ENCODE measurements at regions of chr19 and their contacts with region 1.

Region 1: DNA sequence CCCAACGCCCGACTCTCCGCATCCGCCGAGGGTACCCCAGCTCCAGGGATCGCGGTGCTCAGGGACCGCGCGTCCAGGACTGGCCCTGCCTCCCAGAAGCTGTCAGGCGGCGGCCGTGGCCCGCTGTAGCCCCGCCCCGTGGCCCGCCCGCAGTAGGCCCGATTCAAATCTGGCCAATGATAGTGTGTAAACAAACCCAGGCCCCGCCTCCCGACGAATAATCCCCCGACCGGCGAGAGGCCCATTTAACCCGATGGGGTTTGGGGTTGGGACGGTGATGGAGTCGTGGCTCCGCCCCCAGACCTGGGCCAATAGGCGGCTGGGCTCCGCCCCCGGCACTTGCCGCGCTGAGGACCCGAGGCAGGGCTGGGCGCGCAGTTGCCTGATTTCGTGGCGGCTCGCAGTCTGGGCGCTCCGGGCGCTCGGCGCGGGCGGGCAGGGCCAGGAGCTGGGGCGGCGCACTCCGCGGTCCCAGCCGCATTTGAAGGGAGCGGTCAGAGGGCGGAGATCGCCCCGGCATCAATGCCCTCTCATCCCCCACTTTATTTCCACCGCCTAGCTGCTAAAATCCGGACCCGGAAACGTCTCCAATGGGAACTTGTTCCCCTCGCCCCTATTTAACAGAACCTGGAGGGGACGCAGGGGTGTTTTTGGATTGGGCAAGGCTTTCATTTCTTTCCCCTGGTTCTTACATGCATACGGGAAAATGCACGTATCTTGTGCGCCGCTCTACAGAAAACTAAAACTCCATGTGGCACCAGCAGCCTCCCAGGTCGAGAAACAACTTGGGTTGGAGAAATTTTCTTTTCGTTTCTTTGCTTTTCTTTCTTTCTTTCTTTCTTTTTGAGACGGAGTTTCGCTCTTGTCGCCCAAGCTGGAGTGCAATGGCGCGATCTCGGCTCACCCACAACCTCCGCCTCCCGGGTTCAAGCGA is 8.4 kb upstream of the BICRA start:
- DNase-seq: peak; percentile 99 to 100 (median 100)
- ATAC-seq: peak; percentile 97
- H3K4me3 ChIP-seq: peak overlapping the region; percentile 77 to 93
- H3K4me3 Mint-ChIP-seq: peak overlapping the region; percentile 82
- H3K27ac ChIP-seq: peak overlapping the region; percentile 80 to 83
- H3K27ac Mint-ChIP-seq: peak overlapping the region; percentile 81
- H3K4me1 ChIP-seq: peaks cover 10% of the 10 kb centered on the region
- H3K4me1 Mint-ChIP-seq: peaks cover 26% of the 10 kb centered on the region
- H3K27me3 ChIP-seq: no peaks in the 10 kb centered on the region
- H3K27me3 Mint-ChIP-seq: no peaks in the 10 kb centered on the region
- CTCF ChIP-seq: no peak

Region 2: DNA sequence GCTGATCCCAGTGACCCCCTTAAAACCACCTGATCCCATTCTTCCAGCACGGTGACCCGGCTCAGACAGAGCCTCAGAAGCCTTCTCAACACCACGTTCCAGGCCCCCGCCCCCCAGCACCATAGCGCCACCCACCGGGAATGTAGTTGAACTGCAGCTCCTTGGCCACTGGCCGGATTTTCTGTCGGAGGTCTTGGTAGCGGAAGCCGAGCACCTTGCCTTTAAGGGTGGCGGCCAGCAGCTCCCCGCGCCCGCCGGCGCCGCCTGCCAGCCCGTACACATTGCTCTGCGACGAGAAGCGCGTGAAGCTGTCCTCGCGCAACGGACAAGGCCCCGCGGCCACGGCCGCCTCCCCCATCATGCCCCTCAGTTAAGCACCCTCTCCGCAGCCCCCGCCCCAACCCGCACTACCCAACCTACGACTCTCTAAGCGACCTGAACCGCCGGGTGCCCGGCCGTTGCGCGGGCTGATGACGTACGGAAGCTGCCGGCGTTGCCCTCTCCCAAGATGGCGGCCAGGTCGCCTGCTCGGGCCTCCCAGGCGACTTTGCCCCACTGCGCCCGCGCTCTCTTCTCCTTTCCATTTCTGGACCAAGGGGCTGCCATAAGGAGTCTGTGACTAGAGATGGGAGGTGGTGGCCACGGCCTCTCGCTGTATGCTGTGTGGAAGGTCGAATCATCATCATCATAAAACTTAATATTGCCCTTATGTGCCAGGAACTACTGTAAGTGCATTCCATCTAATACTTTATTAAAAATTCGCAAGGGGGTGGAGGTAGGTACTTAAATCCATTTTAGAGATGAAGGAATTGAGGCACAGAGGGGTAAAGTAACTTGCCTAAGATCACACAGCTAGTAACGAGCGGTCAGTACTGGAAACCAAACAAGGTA is 116.5 kb before region 1 on chr19 and contains the start of gene KPTN:
- CTCF ChIA-PET with region 1: no interaction called
- POLR2A ChIA-PET with region 1: interaction called, 3 read pairs
- intact Hi-C with region 1: loop called in 1 of 2 experiments (anchors 1 kb)
- DNase-seq: peak; percentile 76 to 94 (median 87)
- ATAC-seq: peak; percentile 81
- H3K4me3 ChIP-seq: peak within 1 kb of the TSS; percentile 72 to 74
- H3K4me3 Mint-ChIP-seq: peak within 1 kb of the TSS; percentile 98
- H3K27ac ChIP-seq: peak within 1 kb of the TSS; percentile 75 to 94
- H3K27ac Mint-ChIP-seq: peak within 1 kb of the TSS; percentile 98
- H3K4me1 ChIP-seq: peaks cover 38% of the 10 kb centered on the region
- H3K4me1 Mint-ChIP-seq: peaks cover 45% of the 10 kb centered on the region
- H3K27me3 ChIP-seq: no peaks in the 10 kb centered on the region
- H3K27me3 Mint-ChIP-seq: no peaks in the 10 kb centered on the region
- CTCF ChIP-seq: peak; percentile 69
- total RNA-seq, gene KPTN: 5.4 to 5.9 TPM

Region 3: DNA sequence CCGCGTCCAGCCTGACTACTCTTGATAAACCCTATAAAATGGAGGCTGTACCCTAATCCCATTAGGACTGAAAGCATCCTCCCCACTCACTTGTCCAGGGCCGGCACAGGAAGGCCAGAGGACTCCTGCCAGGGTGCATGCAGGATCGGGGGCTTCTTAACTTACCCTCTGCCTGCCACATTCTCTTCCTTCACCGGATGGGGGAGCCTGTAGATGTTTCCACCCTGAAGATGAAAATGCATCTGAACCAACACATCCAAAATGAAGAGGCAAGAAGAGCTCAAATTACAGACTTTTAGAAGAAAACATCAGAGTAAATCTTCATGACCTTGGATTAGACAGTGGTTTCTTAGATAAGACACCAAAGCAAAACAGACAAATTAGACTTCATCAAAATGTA is 59.8 kb before region 1 on chr19:
- CTCF ChIA-PET with region 1: interaction called, 4 read pairs
- POLR2A ChIA-PET with region 1: no interaction called
- intact Hi-C with region 1: loop called (anchors 1 to 2 kb)
- DNase-seq: peak in 2 of 9 experiments; percentile 42 to 63
- ATAC-seq: no peak
- H3K4me3 ChIP-seq: no peak overlapping the region
- H3K4me3 Mint-ChIP-seq: no peak overlapping the region
- H3K27ac ChIP-seq: peak overlapping the region in 1 of 2 experiments; percentile 65
- H3K27ac Mint-ChIP-seq: peak overlapping the region; percentile 90
- H3K4me1 ChIP-seq: peaks cover 25% of the 10 kb centered on the region
- H3K4me1 Mint-ChIP-seq: peaks cover 21% of the 10 kb centered on the region
- H3K27me3 ChIP-seq: peaks cover 0 to 11% of the 10 kb centered on the region in 2 experiments
- H3K27me3 Mint-ChIP-seq: peaks cover 6% of the 10 kb centered on the region
- CTCF ChIP-seq: no peak

Region 4: DNA sequence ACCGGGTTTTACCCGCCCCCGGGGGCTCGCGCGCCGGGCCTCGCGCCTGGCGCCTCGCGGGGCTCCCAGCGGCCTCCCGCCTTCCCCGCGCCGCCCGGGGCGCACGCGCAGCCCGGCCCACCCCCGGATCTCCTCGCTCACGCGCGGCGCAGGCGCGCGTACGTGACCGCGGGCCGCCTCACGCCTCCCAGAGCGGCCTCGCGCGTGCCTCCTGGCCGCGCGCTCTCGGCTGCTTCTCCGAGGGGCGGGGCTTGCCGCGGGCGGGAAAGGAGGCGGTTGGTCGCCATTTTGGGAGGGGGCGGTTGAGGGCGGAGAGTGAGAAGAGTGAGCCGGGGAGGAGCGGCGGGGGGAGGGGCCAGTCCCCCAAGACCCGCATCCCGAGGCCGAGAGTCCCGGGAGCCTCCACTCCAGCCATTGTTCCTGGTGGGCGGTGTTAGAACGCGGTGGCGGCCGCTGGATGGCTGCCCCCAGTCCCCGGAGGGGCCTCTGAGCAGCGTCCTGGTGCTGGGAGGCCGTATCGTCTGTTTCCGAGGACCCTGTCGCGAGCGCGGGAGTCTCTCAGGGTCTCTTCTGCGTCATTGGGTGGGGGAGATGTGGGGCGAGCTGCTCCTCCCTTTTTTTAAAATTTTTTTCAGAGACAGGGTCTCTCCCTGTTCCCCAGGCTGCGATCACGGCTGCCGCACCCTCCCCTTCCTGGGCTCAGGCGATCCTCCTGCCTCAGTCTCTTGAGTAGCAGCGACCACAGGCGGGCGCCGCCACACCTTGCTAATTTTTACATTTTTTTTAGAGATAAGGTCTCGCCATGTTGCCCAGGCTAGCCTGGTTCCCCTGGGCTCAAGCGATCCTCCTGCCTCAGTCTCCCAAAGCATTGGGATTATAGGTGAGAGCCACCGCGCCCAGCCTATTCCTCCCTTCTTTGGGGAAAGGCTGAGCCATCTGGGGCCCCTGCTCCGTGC is 27.2 kb before region 1 on chr19 and contains the start of gene ZNF541:
- CTCF ChIA-PET with region 1: interaction called, 5 read pairs
- POLR2A ChIA-PET with region 1: interaction called, 5 read pairs
- intact Hi-C with region 1: loop called (anchors 1 kb)
- DNase-seq: peak; percentile 72 to 94 (median 85)
- ATAC-seq: peak; percentile 89
- H3K4me3 ChIP-seq: peak within 1 kb of the TSS; percentile 60
- H3K4me3 Mint-ChIP-seq: peak within 1 kb of the TSS; percentile 72
- H3K27ac ChIP-seq: peak within 1 kb of the TSS in 1 of 2 experiments; percentile 53
- H3K27ac Mint-ChIP-seq: no peak within 1 kb of the TSS
- H3K4me1 ChIP-seq: peaks cover 32% of the 10 kb centered on the region
- H3K4me1 Mint-ChIP-seq: peaks cover 37% of the 10 kb centered on the region
- H3K27me3 ChIP-seq: no peaks in the 10 kb centered on the region
- H3K27me3 Mint-ChIP-seq: no peaks in the 10 kb centered on the region
- CTCF ChIP-seq: no peak
- total RNA-seq, gene ZNF541: 0.33 to 1.5 TPM

Region 5: GRCh38 chr19:48170038-48170812 is 569.7 kb after region 1 on chr19 and contains the starts of genes LIG1 and ZSWIM9:
- CTCF ChIA-PET with region 1: no interaction called
- POLR2A ChIA-PET with region 1: no interaction called
- intact Hi-C with region 1: loop called in 1 of 2 experiments (anchors 2 kb)
- DNase-seq: peak; percentile 82 to 95 (median 90)
- ATAC-seq: peak; percentile 81
- H3K4me3 ChIP-seq: peak within 1 kb of the TSS; percentile 96 to 100
- H3K4me3 Mint-ChIP-seq: peak within 1 kb of the TSS; percentile 98
- H3K27ac ChIP-seq: peak within 1 kb of the TSS; percentile 82 to 92
- H3K27ac Mint-ChIP-seq: peak within 1 kb of the TSS; percentile 97
- H3K4me1 ChIP-seq: peaks cover 7% of the 10 kb centered on the region
- H3K4me1 Mint-ChIP-seq: peaks cover 22% of the 10 kb centered on the region
- H3K27me3 ChIP-seq: no peaks in the 10 kb centered on the region
- H3K27me3 Mint-ChIP-seq: no peaks in the 10 kb centered on the region
- CTCF ChIP-seq: peak; percentile 25
- total RNA-seq, gene LIG1: 62.5 to 67.5 TPM
- total RNA-seq, gene ZSWIM9: 2.5 to 4.5 TPM